CD4-positive, alpha-beta T cell (primary cell): ENCODE measurements at regions of chr1 and their contacts with region 1.

Region 1: GRCh38 chr1:185291652-185292051 is 25.4 kb downstream of the IVNS1ABP start:
- DNase-seq: no peak
- ATAC-seq: no peak
- H3K4me3 ChIP-seq: no peak overlapping the region
- H3K4me3 Mint-ChIP-seq: no peak overlapping the region
- H3K27ac ChIP-seq: no peak overlapping the region
- H3K27ac Mint-ChIP-seq: no peak overlapping the region
- H3K4me1 ChIP-seq: no peaks in the 10 kb centered on the region
- H3K4me1 Mint-ChIP-seq: peaks cover 40% of the 10 kb centered on the region
- H3K27me3 ChIP-seq: no peaks in the 10 kb centered on the region
- H3K27me3 Mint-ChIP-seq: no peaks in the 10 kb centered on the region
- CTCF ChIP-seq: no peak

Region 2: GRCh38 chr1:185249563-185249962 is 42.1 kb before region 1 on chr1:
- CTCF ChIA-PET with region 1: no interaction called
- POLR2A ChIA-PET with region 1: interaction called, 3 read pairs
- intact Hi-C with region 1: loop called in 1 of 2 experiments (anchors 5 kb)
- DNase-seq: no peak
- ATAC-seq: no peak
- H3K4me3 ChIP-seq: no peak overlapping the region
- H3K4me3 Mint-ChIP-seq: no peak overlapping the region
- H3K27ac ChIP-seq: no peak overlapping the region
- H3K27ac Mint-ChIP-seq: peak overlapping the region; percentile 39
- H3K4me1 ChIP-seq: no peaks in the 10 kb centered on the region
- H3K4me1 Mint-ChIP-seq: peaks cover 31% of the 10 kb centered on the region
- H3K27me3 ChIP-seq: no peaks in the 10 kb centered on the region
- H3K27me3 Mint-ChIP-seq: no peaks in the 10 kb centered on the region
- CTCF ChIP-seq: no peak